ENCODE measurements at regions of chr9 and their contacts with region 1.

Region 1: DNA sequence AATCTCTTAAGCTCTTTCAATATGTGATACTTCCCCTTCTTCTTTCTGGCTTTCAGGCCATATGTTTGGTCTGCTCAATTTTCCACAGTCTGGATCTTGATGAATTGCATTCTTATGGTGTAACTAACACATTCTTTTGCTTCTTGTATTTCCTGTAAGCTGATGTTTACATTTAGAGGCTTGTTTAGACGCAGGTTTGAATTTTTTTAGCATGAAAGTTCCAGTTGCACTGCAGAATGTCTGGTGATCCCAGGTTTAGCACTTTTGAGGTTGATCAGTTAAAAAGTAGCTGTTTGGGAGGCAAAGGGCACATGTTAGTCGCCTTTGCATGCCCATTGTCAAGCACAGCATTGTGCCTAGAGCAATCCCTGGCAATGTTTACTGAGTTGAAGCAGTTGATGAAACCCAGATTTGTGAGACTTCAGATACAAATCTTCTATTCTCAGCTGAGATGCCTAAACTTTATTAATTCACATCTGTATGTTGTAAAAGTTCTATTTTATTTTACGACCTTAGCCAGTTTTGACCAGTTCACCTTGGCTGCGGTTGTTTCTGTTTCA is 59.6 kb upstream of the SPATA31C2 start:
- DNase-seq: no peak
- H3K4me3 ChIP-seq: peak overlapping the region in 3 of 4 donors; percentile 31 to 40 (median 36)
- H3K27ac ChIP-seq: peak overlapping the region; percentile 64 to 82 (median 76)
- H3K4me1 ChIP-seq: peaks cover 0 to 37% (median 32%) of the 10 kb centered on the region in 4 donors
- H3K27me3 ChIP-seq: no peaks in the 10 kb centered on the region
- CTCF ChIP-seq: no peak
- EP300 ChIP-seq: peak in 3 of 4 donors; percentile 59 to 79 (median 73)
- POLR2A ChIP-seq: no peak

Region 2: GRCh38 chr9:88991066-88992034 is 793.5 kb after region 1 on chr9 and contains the start of gene S1PR3:
- intact Hi-C with region 1: loop called (anchors 10 kb)
- DNase-seq: peak; percentile 83
- H3K4me3 ChIP-seq: peak within 1 kb of the TSS; percentile 57 to 85 (median 74)
- H3K27ac ChIP-seq: peak within 1 kb of the TSS; percentile 76 to 98 (median 84)
- H3K4me1 ChIP-seq: peaks cover 0 to 59% (median 43%) of the 10 kb centered on the region in 4 donors
- H3K27me3 ChIP-seq: no peaks in the 10 kb centered on the region
- CTCF ChIP-seq: peak in 2 of 4 experiments; percentile 1 to 5
- EP300 ChIP-seq: no peak
- POLR2A ChIP-seq: no peak
- total RNA-seq, gene S1PR3: 10.4 to 33.0 (median 16.8) TPM

Measured in sigmoid colon (tissue), 7 donors.